HAP-1 (cell line): ENCODE measurements at regions of chr3 and their contacts with region 1.

Region 1: DNA sequence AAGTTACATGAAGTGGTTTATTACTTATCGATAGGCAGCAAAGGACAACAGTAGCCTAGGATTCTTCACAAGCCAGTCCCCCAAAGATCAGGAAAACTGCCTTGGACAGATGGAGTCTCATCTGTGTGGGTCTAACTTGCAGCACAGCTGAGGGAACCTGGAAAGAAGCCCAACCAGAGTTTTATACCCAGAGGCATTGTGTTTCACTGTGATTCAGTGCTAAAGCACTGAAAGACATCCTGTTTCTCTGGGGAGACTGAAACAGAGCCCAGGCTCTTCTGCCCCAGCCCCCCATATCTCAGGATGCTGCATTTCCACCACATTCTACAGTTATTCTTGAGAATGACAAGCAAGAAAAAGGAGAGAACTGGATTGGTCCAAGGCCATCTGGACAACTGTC is 48.2 kb upstream of the PYDC2 start:
- DNase-seq: no peak
- H3K4me3 ChIP-seq: no peak overlapping the region
- H3K4me1 ChIP-seq: no peaks in the 10 kb centered on the region
- H3K27me3 ChIP-seq: no peaks in the 10 kb centered on the region

Region 2: GRCh38 chr3:191301017-191301416 is 111.7 kb before region 1 on chr3:
- in situ Hi-C with region 1: no loop called
- DNase-seq: no peak
- H3K4me3 ChIP-seq: no peak overlapping the region
- H3K4me1 ChIP-seq: peaks cover 8% of the 10 kb centered on the region
- H3K27me3 ChIP-seq: no peaks in the 10 kb centered on the region

Region 3: DNA sequence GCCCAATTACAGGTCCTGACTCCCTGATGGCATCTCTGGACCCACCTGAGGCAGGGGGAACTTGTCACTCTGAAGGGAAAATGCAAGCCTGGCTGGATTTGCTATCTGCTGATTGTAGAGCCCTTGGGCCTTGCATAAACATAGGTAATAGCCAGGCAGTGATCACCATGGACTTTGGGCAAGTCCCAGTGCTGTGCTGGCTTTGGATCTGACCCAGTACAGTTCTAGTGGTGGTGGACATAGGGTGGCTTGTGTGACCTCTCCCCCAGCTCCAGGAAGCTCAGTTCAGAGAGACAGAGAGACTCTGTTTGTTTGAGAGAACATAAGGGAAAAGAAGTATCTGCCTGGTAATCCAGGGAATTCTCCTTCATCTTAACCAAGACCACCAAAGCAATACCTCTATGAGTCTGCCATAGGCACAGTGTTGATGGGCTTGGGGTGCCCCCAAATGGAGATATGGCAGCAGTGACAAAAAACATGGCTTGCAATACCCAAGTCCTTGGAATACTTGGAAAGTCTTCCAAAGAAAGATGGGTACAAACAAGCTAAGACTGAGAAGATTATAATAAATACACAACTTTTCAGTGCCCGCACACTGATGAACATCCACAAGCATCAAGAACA is 396.7 kb after region 1 on chr3:
- in situ Hi-C with region 1: loop called (anchors 10 kb)
- DNase-seq: peak; percentile 11 to 34
- H3K4me3 ChIP-seq: no peak overlapping the region
- H3K4me1 ChIP-seq: no peaks in the 10 kb centered on the region
- H3K27me3 ChIP-seq: no peaks in the 10 kb centered on the region

Region 4: DNA sequence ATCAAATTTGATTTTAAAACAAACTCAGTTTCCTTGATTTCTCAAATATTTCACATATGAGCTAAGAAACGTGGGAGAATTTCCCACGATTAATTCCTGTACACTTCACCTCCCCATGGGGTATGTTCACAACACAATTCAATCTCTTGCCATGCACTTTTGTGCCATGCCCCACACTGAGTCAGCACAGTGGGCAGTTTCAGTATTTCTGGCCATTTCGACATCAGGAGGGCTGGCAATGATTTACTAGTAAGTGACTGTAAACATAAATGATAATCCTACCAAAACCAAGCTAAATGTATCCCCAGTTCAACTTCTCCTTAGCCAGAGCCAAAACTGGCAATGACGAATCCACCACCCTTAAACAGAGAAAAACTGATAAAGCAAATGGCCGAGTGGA is 1020.9 kb after region 1 on chr3:
- in situ Hi-C with region 1: loop called (anchors 10 kb)
- DNase-seq: no peak
- H3K4me3 ChIP-seq: no peak overlapping the region
- H3K4me1 ChIP-seq: no peaks in the 10 kb centered on the region
- H3K27me3 ChIP-seq: no peaks in the 10 kb centered on the region